GM10248 (cell line): ENCODE measurements at regions of chr12 and their contacts with region 1.

Region 1: GRCh38 chr12:76621582-76622024 is 62.0 kb upstream of the OSBPL8 start:
- DNase-seq: peak; percentile 63
- CTCF ChIP-seq: peak; percentile 87

Region 2: GRCh38 chr12:76633415-76633814 is 11.8 kb after region 1 on chr12:
- CTCF ChIA-PET with region 1: interaction called, 11 read pairs
- POLR2A ChIA-PET with region 1: no interaction called
- DNase-seq: no peak
- CTCF ChIP-seq: no peak

Region 3: GRCh38 chr12:76688631-76689030 is 67.0 kb after region 1 on chr12:
- CTCF ChIA-PET with region 1: no interaction called
- POLR2A ChIA-PET with region 1: no interaction called
- DNase-seq: no peak
- CTCF ChIP-seq: no peak